G401 (cell line): ENCODE measurements at regions of chr11 and their contacts with region 1.

Region 1: GRCh38 chr11:64458997-64459396 is 100.0 kb downstream of the RPS6KA4 start:
- DNase-seq: no peak

Region 2: GRCh38 chr11:64317957-64318693 is 140.9 kb before region 1 on chr11 and contains the start of gene PRDX5:
- in situ Hi-C with region 1: no loop called
- DNase-seq: peak; percentile 97
- total RNA-seq, gene PRDX5: 341 and 414 TPM in 2 replicates

Region 3: DNA sequence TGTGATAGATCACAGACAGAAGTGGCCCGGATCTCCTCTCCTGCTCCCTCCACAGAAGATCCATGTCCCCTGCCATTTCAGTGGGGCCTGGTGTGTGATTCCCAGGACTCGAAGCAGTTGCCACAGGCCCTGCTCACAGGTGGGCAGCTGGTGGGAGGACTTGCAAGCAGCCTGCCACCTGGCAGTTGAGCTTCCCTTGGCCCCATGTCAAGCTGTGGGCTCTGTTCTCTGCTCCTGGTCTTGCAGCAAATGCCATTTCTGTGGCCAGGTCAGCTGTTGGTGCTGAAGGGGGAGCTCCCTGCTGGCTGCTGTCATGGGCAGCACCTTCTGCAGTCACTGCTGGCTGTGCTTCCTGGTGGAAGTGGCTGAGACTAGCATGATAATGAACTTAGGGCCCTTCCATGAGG is 72.9 kb after region 1 on chr11:
- in situ Hi-C with region 1: loop called (anchors 5 kb)
- DNase-seq: peak; percentile 97